Calu3 (cell line): ENCODE measurements at regions of chr9 and their contacts with region 1.

Region 1: GRCh38 chr9:3467593-3468219 is 58.1 kb downstream of the RFX3 start:
- DNase-seq: peak; percentile 51
- H3K4me3 Mint-ChIP-seq: no peak overlapping the region
- H3K27ac Mint-ChIP-seq: no peak overlapping the region
- H3K4me1 Mint-ChIP-seq: no peaks in the 10 kb centered on the region
- H3K27me3 Mint-ChIP-seq: no peaks in the 10 kb centered on the region
- CTCF ChIP-seq: peak; percentile 37

Region 2: GRCh38 chr9:3508521-3509291 is 41.0 kb after region 1 on chr9:
- CTCF ChIA-PET with region 1: no interaction called
- intact Hi-C with region 1: no loop called
- DNase-seq: no peak
- H3K4me3 Mint-ChIP-seq: no peak overlapping the region
- H3K27ac Mint-ChIP-seq: peak overlapping the region; percentile 34
- H3K4me1 Mint-ChIP-seq: peaks cover 9% of the 10 kb centered on the region
- H3K27me3 Mint-ChIP-seq: no peaks in the 10 kb centered on the region
- CTCF ChIP-seq: no peak

Region 3: GRCh38 chr9:3628239-3628638 is 160.5 kb after region 1 on chr9:
- CTCF ChIA-PET with region 1: no interaction called
- intact Hi-C with region 1: loop called (anchors 10 kb)
- DNase-seq: no peak
- H3K4me3 Mint-ChIP-seq: no peak overlapping the region
- H3K27ac Mint-ChIP-seq: no peak overlapping the region
- H3K4me1 Mint-ChIP-seq: no peaks in the 10 kb centered on the region
- H3K27me3 Mint-ChIP-seq: peaks cover 4% of the 10 kb centered on the region
- CTCF ChIP-seq: no peak

Region 4: GRCh38 chr9:3719286-3719685 is 251.6 kb after region 1 on chr9:
- CTCF ChIA-PET with region 1: no interaction called
- intact Hi-C with region 1: loop called (anchors 10 kb)
- DNase-seq: no peak
- H3K4me3 Mint-ChIP-seq: no peak overlapping the region
- H3K27ac Mint-ChIP-seq: no peak overlapping the region
- H3K4me1 Mint-ChIP-seq: no peaks in the 10 kb centered on the region
- H3K27me3 Mint-ChIP-seq: no peaks in the 10 kb centered on the region
- CTCF ChIP-seq: no peak